Breast epithelium (tissue), 4 donors: ENCODE measurements at regions of chr12 and their contacts with region 1.

Region 1: GRCh38 chr12:68529466-68529865 is 81.2 kb upstream of the RAP1B start:
- DNase-seq: no peak
- H3K4me3 ChIP-seq: no peak overlapping the region
- H3K27ac ChIP-seq: no peak overlapping the region
- H3K4me1 ChIP-seq: no peaks in the 10 kb centered on the region
- H3K27me3 ChIP-seq: no peaks in the 10 kb centered on the region
- CTCF ChIP-seq: no peak
- POLR2A ChIP-seq: no peak

Region 2: DNA sequence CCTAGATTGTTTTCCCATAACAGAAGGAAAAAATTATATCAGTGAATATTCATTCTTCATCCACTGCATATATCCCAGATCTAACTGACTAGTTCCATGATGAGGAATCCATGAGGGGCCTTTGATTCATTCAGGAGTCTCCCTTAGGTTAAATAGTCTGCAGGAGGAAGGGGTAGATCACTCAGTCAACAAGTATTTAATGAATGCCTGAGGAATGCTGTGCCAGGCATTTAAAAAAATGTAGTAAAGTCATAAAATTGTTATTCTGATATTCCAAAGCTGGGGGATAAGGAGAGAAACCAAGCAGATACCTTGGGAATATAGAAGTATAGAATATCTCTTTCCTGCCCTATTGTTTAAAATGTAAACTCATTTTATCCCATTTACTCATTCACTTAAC is 1476.5 kb before region 1 on chr12:
- intact Hi-C with region 1: no loop called
- DNase-seq: no peak
- H3K4me3 ChIP-seq: no peak overlapping the region
- H3K27ac ChIP-seq: no peak overlapping the region
- H3K4me1 ChIP-seq: no peaks in the 10 kb centered on the region
- H3K27me3 ChIP-seq: no peaks in the 10 kb centered on the region
- CTCF ChIP-seq: no peak
- POLR2A ChIP-seq: no peak

Region 3: DNA sequence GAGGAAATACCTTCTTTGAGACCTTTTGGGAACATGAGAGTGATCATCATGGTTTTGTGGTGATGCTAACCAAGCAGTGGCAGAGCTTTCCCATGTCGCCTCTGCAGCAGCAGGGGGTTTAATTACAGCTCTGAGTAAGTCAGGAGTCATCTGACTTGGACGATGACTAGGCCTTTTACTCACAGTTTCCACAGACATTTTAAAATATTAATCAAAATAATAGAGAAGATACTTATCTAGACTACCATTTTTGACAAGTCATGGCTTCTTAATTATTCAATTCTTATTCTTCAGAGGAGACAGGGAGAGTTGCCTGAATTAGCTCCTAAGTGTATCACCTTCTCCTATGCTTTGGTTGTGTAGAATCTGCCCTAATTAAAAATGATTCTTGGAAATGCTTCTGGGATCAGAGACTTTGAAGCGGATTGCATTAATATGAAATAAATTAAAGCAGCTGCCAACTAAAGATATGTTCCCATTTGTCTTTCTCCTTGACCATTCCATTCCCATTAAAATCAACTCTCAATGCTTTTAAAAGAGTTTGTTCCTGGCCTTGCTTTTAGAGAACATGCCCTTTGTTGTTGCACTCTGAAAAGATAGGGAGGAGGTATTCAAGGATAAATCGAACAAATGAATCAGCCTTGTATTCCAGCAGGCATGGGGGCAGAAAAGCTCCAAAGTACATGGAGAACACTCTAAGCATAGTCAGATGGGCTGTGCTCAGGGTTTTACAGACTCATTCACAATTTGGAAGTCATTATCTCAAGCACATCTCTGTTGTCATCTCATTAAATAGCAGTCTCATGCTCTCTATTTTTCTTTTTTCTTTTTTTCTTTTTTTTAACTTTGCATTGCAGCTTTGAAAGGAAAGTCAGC is 547.9 kb before region 1 on chr12:
- intact Hi-C with region 1: no loop called
- DNase-seq: no peak
- H3K4me3 ChIP-seq: no peak overlapping the region
- H3K27ac ChIP-seq: no peak overlapping the region
- H3K4me1 ChIP-seq: no peaks in the 10 kb centered on the region
- H3K27me3 ChIP-seq: no peaks in the 10 kb centered on the region
- CTCF ChIP-seq: no peak
- POLR2A ChIP-seq: no peak

Region 4: GRCh38 chr12:68381476-68382219 is 147.8 kb before region 1 on chr12:
- intact Hi-C with region 1: loop called (anchors 5 kb)
- DNase-seq: no peak
- H3K4me3 ChIP-seq: no peak overlapping the region
- H3K27ac ChIP-seq: no peak overlapping the region
- H3K4me1 ChIP-seq: no peaks in the 10 kb centered on the region
- H3K27me3 ChIP-seq: no peaks in the 10 kb centered on the region
- CTCF ChIP-seq: no peak
- POLR2A ChIP-seq: no peak